Vagina (tissue), 2 donors: ENCODE measurements at regions of chr3 and their contacts with region 1.

Region 1: DNA sequence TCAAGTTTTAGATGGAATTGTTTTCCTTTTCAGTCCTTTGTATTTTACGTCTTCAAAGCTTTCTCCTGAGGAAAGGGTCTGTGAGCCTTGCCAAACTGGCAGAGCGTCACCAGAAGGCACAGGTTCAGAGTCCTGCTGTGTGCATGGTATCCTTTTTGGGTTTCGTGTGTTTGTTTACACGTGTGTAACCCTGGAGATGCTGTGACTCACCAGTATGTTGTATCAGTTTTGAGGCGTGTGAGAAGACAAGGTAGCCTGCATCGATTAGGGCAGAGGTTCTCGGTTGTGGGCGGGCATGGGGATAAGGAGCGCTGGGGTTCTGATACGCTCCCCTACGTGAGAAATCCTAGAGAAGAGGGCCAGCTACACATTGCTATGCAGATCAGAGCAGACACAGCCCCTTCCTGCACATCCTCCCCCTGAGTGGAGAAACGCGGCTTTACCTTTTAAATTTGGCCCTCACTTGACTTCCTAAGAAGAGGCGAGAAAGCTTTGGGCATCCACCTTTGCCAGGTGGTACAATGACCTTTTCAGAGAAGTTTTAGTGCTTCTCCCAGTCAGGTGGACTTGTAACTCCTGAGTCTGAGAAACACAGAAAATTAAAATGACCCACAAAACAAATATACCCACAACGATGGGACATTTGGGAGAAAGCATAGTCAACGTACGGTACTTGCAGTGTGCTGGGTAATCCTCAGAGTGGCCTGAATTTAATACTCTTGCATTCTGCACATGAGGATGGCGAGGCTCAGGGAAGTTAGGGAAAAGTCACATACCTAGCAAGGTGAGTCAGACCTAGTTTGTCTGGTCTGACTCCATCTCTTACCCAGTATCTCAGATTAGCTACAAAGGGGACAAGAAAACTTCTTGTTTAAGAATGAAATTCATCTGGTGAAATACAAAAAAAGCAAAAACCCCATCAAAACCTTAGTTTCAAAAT is 38.1 kb downstream of the TRAK1 start:
- DNase-seq: no peak
- H3K4me3 ChIP-seq: no peak overlapping the region
- H3K27ac ChIP-seq: no peak overlapping the region
- H3K4me1 ChIP-seq: no peaks in the 10 kb centered on the region
- H3K27me3 ChIP-seq: no peaks in the 10 kb centered on the region
- CTCF ChIP-seq: no peak
- POLR2A ChIP-seq: no peak

Region 2: DNA sequence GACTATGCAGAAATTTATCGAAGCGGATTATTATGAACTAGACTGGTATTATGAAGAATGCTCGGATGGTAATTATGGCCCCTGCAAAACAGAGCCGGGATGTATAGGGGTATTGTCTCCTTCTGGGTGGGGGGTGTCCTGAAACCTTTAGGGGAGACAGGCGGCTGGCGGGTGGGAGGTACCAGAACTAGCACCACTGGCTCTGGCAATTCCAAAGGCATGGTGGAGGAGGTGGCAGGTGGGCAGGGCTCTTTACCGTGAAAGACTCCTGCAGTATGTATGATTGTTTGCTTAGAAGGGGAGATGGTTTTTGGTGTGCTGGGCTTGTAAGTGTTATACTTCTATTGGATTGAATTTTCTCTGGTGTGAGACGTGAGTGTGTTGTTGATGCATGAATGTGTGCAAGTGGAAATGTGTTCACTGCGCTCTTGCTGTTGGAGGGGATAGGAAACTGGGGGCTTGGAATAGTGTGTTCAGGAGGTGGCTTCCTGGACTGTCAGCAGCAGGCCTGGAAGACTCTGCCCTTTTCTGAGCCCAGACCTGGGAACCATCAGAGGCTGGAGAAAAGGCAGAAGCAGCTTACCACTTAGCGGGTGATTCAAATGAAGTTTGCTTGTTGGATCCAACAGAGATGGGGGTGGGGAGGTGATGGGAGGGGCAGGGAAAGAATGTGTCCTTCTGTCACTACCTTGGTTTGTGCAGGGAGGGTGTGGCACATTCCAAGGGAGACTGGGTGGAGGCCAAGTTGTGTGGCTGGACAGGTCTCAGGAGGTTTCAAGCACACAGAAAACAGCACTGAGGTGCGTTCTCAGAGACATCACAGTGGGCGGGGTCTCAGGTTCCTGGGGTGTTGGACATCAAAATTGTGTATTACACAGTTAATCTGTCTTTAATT is 20.5 kb after region 1 on chr3:
- intact Hi-C with region 1: loop called (anchors 1 kb)
- DNase-seq: no peak
- H3K4me3 ChIP-seq: no peak overlapping the region
- H3K27ac ChIP-seq: no peak overlapping the region
- H3K4me1 ChIP-seq: peaks cover 35% of the 10 kb centered on the region
- H3K27me3 ChIP-seq: no peaks in the 10 kb centered on the region
- CTCF ChIP-seq: no peak
- POLR2A ChIP-seq: no peak